ENCODE measurements at regions of chr1 and their contacts with region 1.

Region 1: DNA sequence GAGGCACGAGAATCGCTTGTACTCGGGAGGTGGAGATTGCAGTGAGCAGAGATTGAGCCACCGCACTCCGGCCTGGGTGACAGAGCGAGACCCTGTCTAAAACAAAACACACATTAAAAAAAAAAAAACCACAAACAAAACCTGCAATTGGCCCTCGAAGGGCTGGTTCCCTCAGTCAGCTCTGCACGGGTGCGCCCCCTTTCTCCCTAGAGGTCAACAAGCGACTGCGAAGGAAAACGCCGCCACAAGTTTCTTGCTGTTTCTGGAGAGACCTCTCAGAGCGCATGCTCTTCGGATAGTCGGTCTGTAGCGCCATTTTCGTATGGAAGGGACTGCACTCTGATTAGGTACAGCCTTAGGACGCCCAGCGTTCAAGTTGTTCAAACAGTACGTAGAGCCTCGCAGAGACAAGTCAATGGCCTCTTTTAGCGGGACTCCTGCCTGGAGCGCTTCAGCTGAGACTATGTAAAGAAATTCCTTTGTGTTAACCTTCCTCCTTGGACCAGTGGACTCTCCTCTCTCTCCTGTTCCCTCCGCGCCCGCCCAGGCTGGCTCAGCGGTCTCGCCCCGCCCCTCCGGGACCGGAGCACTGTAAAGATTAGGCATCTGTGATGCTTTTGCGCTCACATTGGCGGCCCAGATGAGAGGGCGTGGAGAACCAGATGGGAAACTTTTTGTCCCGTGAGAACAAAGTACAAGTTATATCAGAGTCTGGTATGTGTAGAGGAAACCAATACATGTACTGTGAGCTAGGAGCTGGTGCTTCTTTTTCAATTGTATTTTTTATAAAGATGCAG is 1.0 kb upstream of the CDC14A start:
- DNase-seq: peak; percentile 93
- ATAC-seq: peak; percentile 79
- H3K4me3 ChIP-seq: peak overlapping the region; percentile 85 to 94 (median 89)
- H3K27ac ChIP-seq: peak overlapping the region; percentile 95
- H3K4me1 ChIP-seq: peaks cover 44% of the 10 kb centered on the region
- H3K27me3 ChIP-seq: no peaks in the 10 kb centered on the region; a peak in 1 of 5 replicates
- CTCF ChIP-seq: peak; percentile 68
- EP300 ChIP-seq: no peak
- POLR2A ChIP-seq: peak; percentile 58 to 87
- RAD21 ChIP-seq: no peak

Region 2: DNA sequence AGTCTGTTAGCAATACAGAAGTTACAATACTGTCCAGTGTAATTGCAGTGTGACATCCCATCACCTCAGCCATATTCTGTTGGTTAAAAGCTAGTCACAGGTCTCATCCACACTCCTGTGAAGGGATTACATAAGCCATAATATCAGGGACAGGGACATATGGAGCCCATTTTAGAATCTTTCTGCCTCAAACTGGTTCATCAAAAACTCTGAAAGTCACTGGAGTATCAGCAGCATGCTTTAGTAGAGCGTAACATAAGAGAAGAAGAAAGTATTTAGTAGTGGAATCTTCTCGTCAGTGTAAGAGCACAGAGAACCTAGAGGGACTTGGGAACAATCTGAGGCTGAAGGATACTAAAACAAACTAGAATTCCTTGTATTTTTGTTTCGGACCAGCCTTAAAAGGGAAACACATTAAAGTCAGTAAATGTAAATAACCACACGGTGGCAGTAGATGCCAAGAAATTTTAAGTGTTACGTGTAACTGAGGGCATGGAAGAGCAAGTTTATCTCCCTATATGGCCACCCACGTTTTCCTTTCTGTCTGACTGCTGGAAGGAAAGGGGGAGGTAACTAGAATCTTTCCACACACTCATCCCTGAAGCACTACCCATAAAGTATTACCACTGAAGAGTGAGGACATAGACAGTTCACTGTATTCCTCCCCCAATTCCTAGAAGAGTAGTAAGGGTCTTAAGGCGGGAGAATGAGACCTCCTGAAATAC is 542.7 kb before region 1 on chr1:
- CTCF ChIA-PET with region 1: no interaction called
- POLR2A ChIA-PET with region 1: no interaction called
- in situ Hi-C with region 1: no loop called
- intact Hi-C with region 1: loop called (anchors 5 kb)
- DNase-seq: peak; percentile 81
- ATAC-seq: peak; percentile 95
- H3K4me3 ChIP-seq: peak overlapping the region; percentile 17 to 30 (median 24); a peak in 2 of 6 replicates
- H3K27ac ChIP-seq: no peak overlapping the region
- H3K4me1 ChIP-seq: peaks cover 13% of the 10 kb centered on the region; the same call in 1 of the 2 replicates
- H3K27me3 ChIP-seq: no peaks in the 10 kb centered on the region
- CTCF ChIP-seq: peak; percentile 85
- EP300 ChIP-seq: no peak
- POLR2A ChIP-seq: no peak
- RAD21 ChIP-seq: peak; percentile 81

Region 3: GRCh38 chr1:100132566-100133477 is 218.5 kb before region 1 on chr1 and contains the starts of genes SASS6 and TRMT13:
- CTCF ChIA-PET with region 1: no interaction called
- POLR2A ChIA-PET with region 1: no interaction called
- in situ Hi-C with region 1: no loop called
- intact Hi-C with region 1: loop called (anchors 5 kb)
- DNase-seq: peak; percentile 97
- ATAC-seq: peak; percentile 94
- H3K4me3 ChIP-seq: peak within 1 kb of the TSS; percentile 82 to 97 (median 95)
- H3K27ac ChIP-seq: peak within 1 kb of the TSS; percentile 87
- H3K4me1 ChIP-seq: peaks cover 40% of the 10 kb centered on the region
- H3K27me3 ChIP-seq: no peaks in the 10 kb centered on the region
- CTCF ChIP-seq: 0 out of 2 replicates have a peak, but pooled peaks have one; percentile 1
- EP300 ChIP-seq: peak in 1 of 2 experiments; percentile 42; a peak in 1 of 4 replicates
- POLR2A ChIP-seq: peak in 1 of 2 experiments; percentile 62; a peak in 2 of 4 replicates
- RAD21 ChIP-seq: no peak
- total RNA-seq, gene SASS6: 10.7 and 18.0 TPM in 2 replicates
- total RNA-seq, gene TRMT13: 12.4 and 15.6 TPM in 2 replicates

Region 4: GRCh38 chr1:100164216-100164615 is 187.1 kb before region 1 on chr1:
- CTCF ChIA-PET with region 1: no interaction called
- POLR2A ChIA-PET with region 1: no interaction called
- in situ Hi-C with region 1: no loop called
- intact Hi-C with region 1: no loop called
- DNase-seq: no peak
- ATAC-seq: no peak
- H3K4me3 ChIP-seq: no peak overlapping the region
- H3K27ac ChIP-seq: no peak overlapping the region
- H3K4me1 ChIP-seq: no peaks in the 10 kb centered on the region
- H3K27me3 ChIP-seq: no peaks in the 10 kb centered on the region
- CTCF ChIP-seq: no peak
- EP300 ChIP-seq: no peak
- POLR2A ChIP-seq: no peak
- RAD21 ChIP-seq: no peak

Region 5: DNA sequence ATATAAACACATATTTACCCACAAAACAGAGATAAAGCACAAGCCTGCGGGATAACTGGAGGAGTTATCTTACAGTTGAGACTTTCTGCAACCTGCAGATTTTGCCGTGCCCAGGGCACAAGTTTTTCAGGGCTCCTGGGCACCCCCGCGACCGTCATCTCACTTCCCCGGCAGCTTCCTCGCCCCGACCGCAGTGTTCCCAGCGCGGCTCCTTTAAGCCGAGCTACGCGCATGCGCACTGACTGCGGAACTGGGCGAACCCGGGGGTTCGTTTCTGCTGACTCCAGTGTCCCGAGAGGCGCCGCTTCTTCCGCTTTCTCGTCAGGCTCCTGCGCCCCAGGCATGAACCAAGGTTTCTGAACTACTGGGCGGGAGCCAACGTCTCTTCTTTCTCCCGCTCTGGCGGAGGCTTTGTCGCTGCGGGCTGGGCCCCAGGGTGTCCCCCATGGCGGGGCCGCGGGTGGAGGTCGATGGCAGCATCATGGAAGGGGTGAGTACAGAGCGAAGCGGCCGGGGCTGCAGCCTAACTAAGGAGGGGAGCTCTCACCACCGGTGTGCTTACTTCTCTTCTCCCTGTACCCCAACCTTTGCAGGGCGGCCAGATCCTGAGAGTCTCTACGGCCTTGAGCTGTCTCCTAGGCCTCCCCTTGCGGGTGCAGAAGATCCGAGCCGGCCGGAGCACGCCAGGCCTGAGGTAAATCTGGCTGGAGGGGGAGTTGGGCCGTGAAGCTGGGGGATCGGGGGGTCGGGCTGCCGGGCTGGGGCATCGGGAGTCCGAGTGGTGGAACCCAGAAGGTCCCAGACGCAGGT is 85.2 kb before region 1 on chr1 and contains the start of gene RTCA:
- CTCF ChIA-PET with region 1: no interaction called
- POLR2A ChIA-PET with region 1: interaction called, 13 read pairs
- in situ Hi-C with region 1: loop called (anchors 5 kb)
- intact Hi-C with region 1: loop called (anchors 2 kb)
- DNase-seq: peak; percentile 90
- ATAC-seq: peak; percentile 97
- H3K4me3 ChIP-seq: peak within 1 kb of the TSS; percentile 94 to 99 (median 98)
- H3K27ac ChIP-seq: peak within 1 kb of the TSS; percentile 89
- H3K4me1 ChIP-seq: peaks cover 39% of the 10 kb centered on the region
- H3K27me3 ChIP-seq: no peaks in the 10 kb centered on the region; a peak in 1 of 5 replicates
- CTCF ChIP-seq: no peak
- EP300 ChIP-seq: no peak
- POLR2A ChIP-seq: peak; percentile 81 to 84
- RAD21 ChIP-seq: no peak
- total RNA-seq, gene RTCA: 31.0 and 37.7 TPM in 2 replicates